Lower leg skin (tissue), 4 donors: ENCODE measurements at regions of chr18 and their contacts with region 1.

Region 1: DNA sequence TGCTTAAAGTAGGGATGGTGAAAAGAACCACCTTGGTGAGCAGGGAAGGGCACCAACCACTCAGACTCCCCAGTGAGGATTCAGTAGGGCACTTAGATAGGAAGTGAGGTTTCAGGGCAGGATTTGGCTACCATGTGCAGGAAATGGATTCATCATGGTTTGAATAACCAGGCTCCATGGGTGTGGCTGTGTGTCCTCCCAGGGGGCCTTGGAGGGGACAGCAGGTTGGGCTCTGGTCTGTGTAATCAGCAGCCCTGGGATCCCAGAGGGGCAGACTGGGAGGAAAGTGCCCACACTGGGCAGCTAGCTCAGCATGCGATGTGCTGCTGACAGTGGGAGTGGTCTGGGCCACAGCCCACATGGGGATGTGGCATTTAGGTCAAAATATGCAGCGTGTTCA is 224.6 kb downstream of the CELF4 start:
- DNase-seq: no peak
- H3K4me3 ChIP-seq: no peak overlapping the region
- CTCF ChIP-seq: no peak
- POLR2A ChIP-seq: no peak

Region 2: GRCh38 chr18:37309055-37309454 is 32.0 kb before region 1 on chr18:
- intact Hi-C with region 1: no loop called
- DNase-seq: no peak
- H3K4me3 ChIP-seq: no peak overlapping the region
- CTCF ChIP-seq: no peak
- POLR2A ChIP-seq: no peak

Region 3: DNA sequence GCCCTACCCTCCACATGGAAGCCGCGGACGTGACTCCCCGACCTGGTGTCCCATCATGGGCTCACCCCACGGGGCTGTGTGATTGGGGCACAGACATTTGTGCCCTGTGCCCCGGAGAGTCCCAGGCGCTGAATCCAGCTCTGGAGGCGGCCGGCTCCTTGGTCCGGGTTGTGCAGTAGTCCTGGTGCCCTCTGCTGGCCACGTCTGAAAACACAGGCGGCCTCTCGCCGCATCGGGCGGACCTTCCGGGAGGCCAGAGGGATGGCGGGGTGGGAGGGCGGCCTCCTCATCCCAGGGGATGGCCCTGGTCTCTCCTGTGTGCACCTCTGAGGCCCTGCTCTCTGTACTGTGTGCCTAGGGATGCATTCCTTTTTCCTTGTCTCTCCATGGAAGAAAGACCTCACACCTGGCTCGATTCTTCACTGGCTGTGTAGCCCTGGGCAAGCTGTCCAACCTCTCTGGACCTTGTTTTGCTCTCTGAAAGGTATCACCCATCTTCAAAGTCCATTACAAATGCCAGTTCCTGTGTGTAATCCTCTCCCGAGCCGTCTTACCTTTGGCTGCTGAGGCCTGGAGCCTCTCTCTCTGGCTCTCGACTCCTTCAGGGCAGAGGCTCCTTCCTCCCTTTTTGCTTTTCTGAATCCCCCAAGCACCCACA is 197.0 kb after region 1 on chr18:
- intact Hi-C with region 1: loop called (anchors 5 kb)
- DNase-seq: peak; percentile 41 to 91
- H3K4me3 ChIP-seq: no peak overlapping the region
- CTCF ChIP-seq: no peak
- POLR2A ChIP-seq: no peak